Right ventricle myocardium superior (tissue), 1 donor: ENCODE measurements at regions of chr1 and their contacts with region 1.

Region 1: GRCh38 chr1:167207940-167208623 is 12.6 kb upstream of the POU2F1 start:
- DNase-seq: no peak
- ATAC-seq: no peak

Region 2: GRCh38 chr1:167066333-167067122 is 141.6 kb before region 1 on chr1:
- intact Hi-C with region 1: loop called (anchors 5 kb)
- DNase-seq: peak; percentile 86
- ATAC-seq: peak; percentile 96